PC-3 (cell line): ENCODE measurements at regions of chr10 and their contacts with region 1.

Region 1: DNA sequence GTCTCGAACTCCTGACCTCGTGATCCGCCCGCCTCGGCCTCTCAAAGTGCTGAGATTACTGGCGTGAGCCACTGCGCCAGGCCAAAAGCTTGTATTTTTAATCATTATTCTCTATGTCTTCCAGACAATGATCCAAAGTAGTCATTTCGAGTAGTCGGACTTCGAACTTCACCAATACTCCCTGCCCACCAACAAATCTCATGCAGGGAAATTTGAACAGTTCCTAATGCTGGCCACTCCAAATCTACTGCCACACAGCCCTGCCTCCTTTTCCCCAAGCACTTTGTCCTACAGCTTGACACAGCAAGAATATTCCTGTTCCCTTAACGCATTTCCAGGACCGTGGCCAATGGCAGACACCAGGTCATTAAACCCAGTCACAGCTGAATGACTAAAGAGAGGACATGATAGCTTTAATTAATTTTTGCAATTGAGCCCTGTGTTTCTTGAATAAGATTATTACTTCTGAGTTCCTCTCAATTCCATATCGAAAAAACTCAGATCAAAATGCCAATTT is 142.3 kb upstream of the NRP1 start:
- DNase-seq: no peak
- ATAC-seq: no peak
- H3K4me3 ChIP-seq: no peak overlapping the region
- H3K27ac ChIP-seq: no peak overlapping the region
- H3K4me1 ChIP-seq: 0 out of 2 replicates have a peak, but pooled peaks cover 8% of the 10 kb centered on the region
- H3K27me3 ChIP-seq: no peaks in the 10 kb centered on the region
- CTCF ChIP-seq: no peak

Region 2: DNA sequence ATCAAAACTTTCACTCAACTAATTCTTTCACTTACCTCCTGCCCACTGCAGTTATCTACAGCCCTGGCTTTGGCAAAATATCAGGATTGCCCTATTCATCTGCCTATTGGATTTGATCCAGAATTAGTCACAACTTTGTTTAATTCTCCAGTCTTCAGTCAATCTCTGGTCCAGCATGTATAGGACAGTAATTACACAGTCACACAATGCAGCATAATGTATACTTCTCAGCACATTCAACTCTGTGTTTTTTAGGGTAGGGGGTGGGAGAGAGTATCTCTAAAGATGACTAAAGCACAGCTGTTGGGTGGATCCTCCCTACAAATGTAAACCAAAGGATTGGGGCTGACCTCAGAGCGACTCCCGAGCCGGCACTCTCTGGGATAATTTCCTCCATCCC is 124.6 kb before region 1 on chr10:
- CTCF ChIA-PET with region 1: no interaction called
- POLR2A ChIA-PET with region 1: no interaction called
- intact Hi-C with region 1: loop called (anchors 5 kb)
- DNase-seq: peak; percentile 100
- ATAC-seq: peak; percentile 69
- H3K4me3 ChIP-seq: peak overlapping the region; percentile 48
- H3K27ac ChIP-seq: peak overlapping the region; percentile 63
- H3K4me1 ChIP-seq: peaks cover 82% of the 10 kb centered on the region
- H3K27me3 ChIP-seq: no peaks in the 10 kb centered on the region
- CTCF ChIP-seq: no peak

Region 3: GRCh38 chr10:33412653-33413361 is 64.0 kb before region 1 on chr10:
- CTCF ChIA-PET with region 1: no interaction called
- POLR2A ChIA-PET with region 1: no interaction called
- intact Hi-C with region 1: no loop called
- DNase-seq: peak; percentile 85
- ATAC-seq: peak; percentile 54
- H3K4me3 ChIP-seq: no peak overlapping the region
- H3K27ac ChIP-seq: peak overlapping the region; percentile 15
- H3K4me1 ChIP-seq: peaks cover 16% of the 10 kb centered on the region
- H3K27me3 ChIP-seq: no peaks in the 10 kb centered on the region
- CTCF ChIP-seq: no peak

Region 4: DNA sequence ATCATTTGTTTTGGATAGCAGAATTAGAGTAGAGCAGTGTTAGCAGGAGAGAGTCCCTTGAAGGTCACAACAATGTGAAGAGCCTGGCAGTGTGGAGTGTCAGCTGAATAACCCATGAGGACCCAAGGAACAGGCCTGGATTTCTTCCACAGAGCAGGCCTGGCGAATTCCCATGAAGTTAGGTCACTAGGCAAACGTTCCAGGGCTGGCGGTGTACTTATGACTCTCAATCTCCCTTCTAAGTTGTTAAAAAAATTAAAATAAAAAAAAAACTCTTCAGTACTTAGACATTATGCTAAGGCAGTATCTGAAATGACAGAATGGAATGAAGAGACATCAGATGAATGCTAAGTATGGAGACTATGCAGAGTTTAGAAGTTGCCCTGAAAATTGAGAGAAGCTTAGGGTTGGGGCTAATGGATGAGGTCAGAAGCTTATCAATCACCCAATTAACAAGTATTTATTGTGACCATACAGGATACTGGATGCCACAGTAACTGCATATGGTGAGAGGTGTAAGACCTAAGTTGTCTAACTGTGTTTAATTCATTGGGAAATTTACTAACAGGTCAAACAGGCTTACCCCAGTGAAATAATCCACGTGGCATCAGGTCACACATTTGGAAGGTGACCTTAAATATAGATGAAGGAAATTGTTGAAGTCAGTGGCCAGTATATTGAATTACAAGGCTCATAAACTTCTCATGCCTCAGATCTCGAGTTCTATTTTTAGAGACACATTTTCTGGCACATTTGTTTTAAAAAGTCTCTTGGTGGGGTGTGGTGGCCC is 16.1 kb before region 1 on chr10:
- CTCF ChIA-PET with region 1: interaction called, 18 read pairs
- POLR2A ChIA-PET with region 1: no interaction called
- intact Hi-C with region 1: no loop called
- DNase-seq: peak; percentile 73
- ATAC-seq: peak; percentile 69
- H3K4me3 ChIP-seq: no peak overlapping the region
- H3K27ac ChIP-seq: no peak overlapping the region
- H3K4me1 ChIP-seq: peaks cover 19% of the 10 kb centered on the region
- H3K27me3 ChIP-seq: no peaks in the 10 kb centered on the region
- CTCF ChIP-seq: no peak

Region 5: GRCh38 chr10:33760056-33760943 is 283.5 kb after region 1 on chr10:
- CTCF ChIA-PET with region 1: no interaction called
- POLR2A ChIA-PET with region 1: no interaction called
- intact Hi-C with region 1: no loop called
- DNase-seq: no peak
- ATAC-seq: no peak
- H3K4me3 ChIP-seq: no peak overlapping the region
- H3K27ac ChIP-seq: no peak overlapping the region
- H3K4me1 ChIP-seq: no peaks in the 10 kb centered on the region
- H3K27me3 ChIP-seq: no peaks in the 10 kb centered on the region
- CTCF ChIP-seq: no peak